PC-9 (cell line): ENCODE measurements at regions of chr5 and their contacts with region 1.

Region 1: GRCh38 chr5:1562599-1562998 is 38.8 kb upstream of the LPCAT1 start:
- DNase-seq: no peak
- H3K4me3 ChIP-seq: no peak overlapping the region
- H3K27ac ChIP-seq: no peak overlapping the region
- H3K4me1 ChIP-seq: peaks cover 45% of the 10 kb centered on the region
- H3K27me3 ChIP-seq: peaks cover 18% of the 10 kb centered on the region
- CTCF ChIP-seq: no peak

Region 2: DNA sequence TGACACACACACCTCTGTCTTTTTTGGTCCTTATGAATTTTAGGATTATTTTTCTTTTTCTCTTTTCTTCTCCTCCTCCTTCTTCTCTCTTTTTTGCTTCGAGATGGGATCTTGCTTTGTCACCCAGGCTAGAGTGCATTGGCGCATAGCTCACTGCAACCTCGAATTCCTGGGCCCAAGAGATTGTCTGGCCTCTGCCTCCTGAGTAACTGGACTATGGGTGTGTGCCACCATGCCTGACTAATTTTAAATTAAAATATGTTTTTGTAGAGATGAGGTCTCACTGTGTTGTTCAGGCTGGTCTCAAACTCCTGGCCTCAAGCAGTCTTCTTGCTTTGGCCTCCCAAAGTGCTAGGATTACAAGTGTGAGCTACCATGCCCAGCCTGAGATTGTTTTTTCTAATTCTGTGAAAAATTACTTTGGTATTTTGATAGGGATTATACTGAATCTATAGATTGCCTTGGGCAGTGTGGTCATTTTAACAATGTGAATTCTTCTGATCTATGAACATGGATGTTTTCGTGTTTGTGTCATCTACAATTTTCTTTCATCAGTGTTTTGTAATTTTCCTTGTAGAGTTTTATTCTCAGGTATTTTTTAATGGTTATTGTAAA is 1233.4 kb before region 1 on chr5:
- CTCF ChIA-PET with region 1: no interaction called
- POLR2A ChIA-PET with region 1: interaction called, 10 read pairs
- intact Hi-C with region 1: no loop called
- DNase-seq: peak in 1 of 2 experiments; percentile 72
- H3K4me3 ChIP-seq: no peak overlapping the region
- H3K27ac ChIP-seq: 0 out of 2 replicates have a peak overlapping the region, but pooled peaks have one; percentile 3
- H3K4me1 ChIP-seq: peaks cover 6% of the 10 kb centered on the region; the same call in 1 of the 2 replicates
- H3K27me3 ChIP-seq: no peaks in the 10 kb centered on the region
- CTCF ChIP-seq: no peak

Region 3: DNA sequence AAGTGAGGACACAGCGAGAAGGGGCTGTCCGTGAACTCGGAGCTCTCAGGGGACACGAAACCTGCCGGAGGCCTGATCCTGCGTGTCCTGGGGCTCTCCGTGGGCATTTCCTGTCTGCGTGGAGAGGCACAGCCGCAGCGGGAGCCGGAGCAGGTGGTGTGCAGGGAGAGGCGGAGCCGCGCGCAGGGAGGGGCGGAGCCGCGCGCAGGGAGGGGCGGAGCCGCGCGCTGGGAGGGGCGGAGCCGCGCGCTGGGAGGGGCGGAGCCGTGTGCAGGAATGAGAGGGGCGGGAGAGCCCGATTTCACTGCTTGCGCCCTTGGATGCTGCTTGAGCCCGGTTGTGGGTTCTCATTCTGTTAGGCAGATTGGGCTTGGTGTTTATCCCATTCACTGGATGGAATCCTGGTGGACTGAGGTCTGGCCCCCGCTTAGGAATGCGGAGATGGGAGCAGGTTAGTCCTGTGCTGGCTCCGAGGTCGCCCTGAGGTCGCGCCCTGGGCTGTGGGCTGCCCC is 265.3 kb after region 1 on chr5:
- CTCF ChIA-PET with region 1: no interaction called
- POLR2A ChIA-PET with region 1: no interaction called
- intact Hi-C with region 1: no loop called
- DNase-seq: no peak
- H3K4me3 ChIP-seq: no peak overlapping the region
- H3K27ac ChIP-seq: no peak overlapping the region
- H3K4me1 ChIP-seq: no peaks in the 10 kb centered on the region
- H3K27me3 ChIP-seq: peaks cover 12% of the 10 kb centered on the region; the same call in 1 of the 2 replicates
- CTCF ChIP-seq: no peak